Activated CD8-positive, alpha-beta memory T cell treated with anti-CD3 and anti-CD28 coated beads, Interleukin-2, amount 10 ng/mL, durations not matched to agents 7 days and 5 days (primary cell): ENCODE measurements at regions of chr11 and their contacts with region 1.

Region 1: GRCh38 chr11:88535916-88536547 is 198.5 kb upstream of the CTSC start:
- DNase-seq: no peak
- ATAC-seq: peak; percentile 99
- H3K4me3 Mint-ChIP-seq: no peak overlapping the region
- H3K27ac Mint-ChIP-seq: peak overlapping the region; percentile 14
- H3K4me1 Mint-ChIP-seq: peaks cover 18% of the 10 kb centered on the region
- H3K27me3 Mint-ChIP-seq: peaks cover 14% of the 10 kb centered on the region

Region 2: GRCh38 chr11:88552377-88553062 is 16.5 kb after region 1 on chr11:
- CTCF ChIA-PET with region 1: interaction called, 15 read pairs
- DNase-seq: peak; percentile 74
- ATAC-seq: peak; percentile 83
- H3K4me3 Mint-ChIP-seq: no peak overlapping the region
- H3K27ac Mint-ChIP-seq: no peak overlapping the region
- H3K4me1 Mint-ChIP-seq: no peaks in the 10 kb centered on the region
- H3K27me3 Mint-ChIP-seq: peaks cover 20% of the 10 kb centered on the region